ENCODE measurements at regions of chr2 and their contacts with region 1.

Region 1: GRCh38 chr2:165645930-165646831 is 147.9 kb downstream of the GALNT3 start:
- DNase-seq: no peak
- ATAC-seq: no peak
- H3K4me3 ChIP-seq: no peak overlapping the region
- H3K27ac ChIP-seq: no peak overlapping the region
- H3K4me1 ChIP-seq: no peaks in the 10 kb centered on the region
- H3K27me3 ChIP-seq: no peaks in the 10 kb centered on the region
- CTCF ChIP-seq: no peak
- EP300 ChIP-seq: no peak
- POLR2A ChIP-seq: no peak
- RAD21 ChIP-seq: no peak

Region 2: DNA sequence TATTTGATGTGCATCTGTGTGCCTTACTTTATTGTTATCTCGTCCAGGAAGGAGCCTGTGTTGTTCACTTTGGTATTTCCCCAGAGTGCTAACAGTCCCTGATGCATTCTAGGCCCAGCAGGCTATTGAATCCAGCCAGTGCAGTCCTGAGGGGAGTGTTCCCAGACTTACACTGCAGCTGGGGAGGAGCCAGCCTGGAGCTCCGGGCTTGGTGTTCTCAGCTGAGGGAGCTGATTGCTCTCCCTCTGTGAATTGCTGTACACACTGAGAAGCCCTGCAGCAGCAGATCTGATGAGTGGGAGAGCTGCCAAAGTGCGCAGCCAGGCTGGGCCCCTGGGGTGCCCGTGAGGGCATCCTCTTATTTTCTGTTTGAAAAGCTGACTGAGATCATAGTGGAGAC is 11.3 kb before region 1 on chr2:
- CTCF ChIA-PET with region 1: interaction called, 8 read pairs
- POLR2A ChIA-PET with region 1: interaction called, 3 read pairs
- RAD21 ChIA-PET with region 1: interaction called, 4 read pairs
- SMC1A ChIA-PET with region 1: interaction called, 38 read pairs
- in situ Hi-C with region 1: no loop called
- intact Hi-C with region 1: no loop called
- DNase-seq: no peak
- ATAC-seq: peak; percentile 54
- H3K4me3 ChIP-seq: no peak overlapping the region
- H3K27ac ChIP-seq: no peak overlapping the region
- H3K4me1 ChIP-seq: no peaks in the 10 kb centered on the region
- H3K27me3 ChIP-seq: no peaks in the 10 kb centered on the region
- CTCF ChIP-seq: no peak
- EP300 ChIP-seq: no peak
- POLR2A ChIP-seq: no peak
- RAD21 ChIP-seq: no peak

Region 3: GRCh38 chr2:165660361-165660760 is 14.2 kb after region 1 on chr2:
- CTCF ChIA-PET with region 1: interaction called, 4 read pairs
- POLR2A ChIA-PET with region 1: interaction called, 13 read pairs
- RAD21 ChIA-PET with region 1: interaction called, 19 read pairs
- SMC1A ChIA-PET with region 1: interaction called, 39 read pairs
- in situ Hi-C with region 1: no loop called
- intact Hi-C with region 1: no loop called
- DNase-seq: no peak
- ATAC-seq: peak; percentile 88
- H3K4me3 ChIP-seq: no peak overlapping the region
- H3K27ac ChIP-seq: no peak overlapping the region
- H3K4me1 ChIP-seq: no peaks in the 10 kb centered on the region
- H3K27me3 ChIP-seq: no peaks in the 10 kb centered on the region
- CTCF ChIP-seq: no peak
- EP300 ChIP-seq: no peak
- POLR2A ChIP-seq: no peak
- RAD21 ChIP-seq: no peak

Measured in GM12878 (cell line).